ENCODE measurements at regions of chr17 and their contacts with region 1.

Region 1: GRCh38 chr17:28612936-28613872 is 781 bp downstream of the RSKR start:
- DNase-seq: peak in 3 of 10 donors; percentile 45 to 47 (median 45)

Region 2: GRCh38 chr17:28547623-28548416 is 65.4 kb before region 1 on chr17:
- intact Hi-C with region 1: loop called (anchors 1 kb)
- DNase-seq: peak; percentile 48 to 94 (median 76)

Measured in posterior cingulate gyrus (tissue), 11 donors.